PC-9 (cell line): ENCODE measurements at regions of chr5 and their contacts with region 1.

Region 1: GRCh38 chr5:96546120-96546519 is 113.1 kb upstream of the PCSK1 start:
- DNase-seq: no peak
- H3K4me3 ChIP-seq: no peak overlapping the region
- H3K27ac ChIP-seq: no peak overlapping the region
- H3K4me1 ChIP-seq: no peaks in the 10 kb centered on the region
- H3K27me3 ChIP-seq: no peaks in the 10 kb centered on the region
- CTCF ChIP-seq: no peak

Region 2: GRCh38 chr5:96220610-96221390 is 325.3 kb before region 1 on chr5:
- CTCF ChIA-PET with region 1: no interaction called
- POLR2A ChIA-PET with region 1: interaction called, 11 read pairs
- intact Hi-C with region 1: no loop called
- DNase-seq: no peak
- H3K4me3 ChIP-seq: no peak overlapping the region
- H3K27ac ChIP-seq: no peak overlapping the region
- H3K4me1 ChIP-seq: no peaks in the 10 kb centered on the region
- H3K27me3 ChIP-seq: no peaks in the 10 kb centered on the region
- CTCF ChIP-seq: no peak

Region 3: GRCh38 chr5:96370976-96371375 is 175.1 kb before region 1 on chr5:
- CTCF ChIA-PET with region 1: no interaction called
- POLR2A ChIA-PET with region 1: no interaction called
- intact Hi-C with region 1: no loop called
- DNase-seq: no peak
- H3K4me3 ChIP-seq: no peak overlapping the region
- H3K27ac ChIP-seq: no peak overlapping the region
- H3K4me1 ChIP-seq: no peaks in the 10 kb centered on the region
- H3K27me3 ChIP-seq: no peaks in the 10 kb centered on the region
- CTCF ChIP-seq: no peak

Region 4: GRCh38 chr5:96601811-96602244 is 55.7 kb after region 1 on chr5:
- CTCF ChIA-PET with region 1: no interaction called
- POLR2A ChIA-PET with region 1: no interaction called
- intact Hi-C with region 1: no loop called
- DNase-seq: peak; percentile 32 to 38
- H3K4me3 ChIP-seq: no peak overlapping the region
- H3K27ac ChIP-seq: no peak overlapping the region
- H3K4me1 ChIP-seq: no peaks in the 10 kb centered on the region
- H3K27me3 ChIP-seq: no peaks in the 10 kb centered on the region
- CTCF ChIP-seq: peak; percentile 89